ENCODE measurements at regions of chr19 and their contacts with region 1.

Region 1: GRCh38 chr19:45092747-45093678 is at the start of gene PPP1R37:
- DNase-seq: peak; percentile 88 to 95 (median 93)
- H3K4me3 ChIP-seq: peak within 1 kb of the TSS; percentile 91
- H3K4me3 Mint-ChIP-seq: peak within 1 kb of the TSS; percentile 91 to 97 (median 93)
- H3K27ac ChIP-seq: peak within 1 kb of the TSS; percentile 93
- H3K27ac Mint-ChIP-seq: peak within 1 kb of the TSS; percentile 90 to 100 (median 98)
- H3K4me1 ChIP-seq: peaks cover 71% of the 10 kb centered on the region
- H3K4me1 Mint-ChIP-seq: peaks cover 68 to 78% (median 75%) of the 10 kb centered on the region in 3 donors
- H3K27me3 ChIP-seq: no peaks in the 10 kb centered on the region
- H3K27me3 Mint-ChIP-seq: no peaks in the 10 kb centered on the region
- total RNA-seq, gene PPP1R37: 17.8 to 18.3 TPM

Region 2: GRCh38 chr19:45038931-45039893 is 53.8 kb before region 1 on chr19 and contains the start of gene CLASRP:
- CTCF ChIA-PET with region 1: interaction called, 11 read pairs
- POLR2A ChIA-PET with region 1: interaction called, 5 read pairs
- DNase-seq: peak; percentile 83 to 90 (median 85)
- H3K4me3 ChIP-seq: peak within 1 kb of the TSS; percentile 95
- H3K4me3 Mint-ChIP-seq: peak within 1 kb of the TSS; percentile 86 to 100 (median 94)
- H3K27ac ChIP-seq: peak within 1 kb of the TSS; percentile 98
- H3K27ac Mint-ChIP-seq: peak within 1 kb of the TSS; percentile 79 to 100 (median 95)
- H3K4me1 ChIP-seq: peaks cover 24% of the 10 kb centered on the region
- H3K4me1 Mint-ChIP-seq: peaks cover 32 to 43% (median 32%) of the 10 kb centered on the region in 3 donors
- H3K27me3 ChIP-seq: no peaks in the 10 kb centered on the region
- H3K27me3 Mint-ChIP-seq: peaks cover 0 to 2% of the 10 kb centered on the region in 2 donors
- total RNA-seq, gene CLASRP: 75.5 to 84.1 TPM

Region 3: DNA sequence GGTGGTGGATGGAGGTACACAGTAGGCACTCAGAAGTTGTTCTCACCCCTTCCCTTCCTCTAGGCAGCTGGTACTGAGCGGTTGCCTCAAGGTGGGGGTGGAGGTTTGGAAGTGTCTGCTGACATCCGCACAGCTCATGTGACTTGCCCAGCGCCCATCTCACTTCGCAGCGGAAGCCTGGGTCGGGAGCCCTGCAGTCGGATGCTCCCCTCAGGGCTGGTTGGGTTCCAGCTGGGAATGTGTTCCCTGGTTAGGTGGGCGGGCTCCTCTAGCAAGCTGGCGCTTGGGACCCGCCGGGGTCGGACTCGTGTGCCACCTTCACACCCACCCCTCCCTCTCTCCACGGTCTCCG is 10.1 kb after region 1 on chr19:
- CTCF ChIA-PET with region 1: interaction called, 22 read pairs
- POLR2A ChIA-PET with region 1: interaction called, 20 read pairs
- DNase-seq: peak; percentile 20 to 75 (median 30)
- H3K4me3 ChIP-seq: peak overlapping the region; percentile 45
- H3K4me3 Mint-ChIP-seq: peak overlapping the region in 6 of 7 donors; percentile 63 to 88 (median 71)
- H3K27ac ChIP-seq: no peak overlapping the region
- H3K27ac Mint-ChIP-seq: peak overlapping the region in 7 of 8 donors; percentile 28 to 88 (median 77)
- H3K4me1 ChIP-seq: peaks cover 43% of the 10 kb centered on the region
- H3K4me1 Mint-ChIP-seq: peaks cover 49 to 74% (median 65%) of the 10 kb centered on the region in 3 donors
- H3K27me3 ChIP-seq: no peaks in the 10 kb centered on the region
- H3K27me3 Mint-ChIP-seq: no peaks in the 10 kb centered on the region

Region 4: DNA sequence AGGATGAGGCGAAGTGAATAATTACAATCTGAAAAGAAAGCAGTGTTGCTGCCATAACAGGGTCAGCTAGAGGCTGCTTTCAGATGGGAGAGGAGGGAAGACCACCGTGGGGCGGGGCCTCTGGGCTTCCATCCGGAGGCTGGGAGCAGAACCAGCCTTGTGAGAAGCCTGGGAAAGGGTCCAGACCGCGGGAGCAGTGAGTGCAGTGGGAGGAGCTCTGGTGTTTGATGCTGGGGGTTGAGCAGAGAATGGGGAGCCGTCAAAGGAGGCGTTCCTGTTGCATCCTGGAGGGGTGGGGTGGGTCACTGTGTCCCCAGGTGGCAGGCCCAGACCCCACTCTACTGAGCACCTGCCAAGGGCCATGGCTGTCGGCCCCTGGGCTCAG is 49.7 kb after region 1 on chr19:
- CTCF ChIA-PET with region 1: no interaction called
- POLR2A ChIA-PET with region 1: no interaction called
- DNase-seq: no peak
- H3K4me3 ChIP-seq: no peak overlapping the region
- H3K4me3 Mint-ChIP-seq: no peak overlapping the region
- H3K27ac ChIP-seq: no peak overlapping the region
- H3K27ac Mint-ChIP-seq: no peak overlapping the region
- H3K4me1 ChIP-seq: no peaks in the 10 kb centered on the region
- H3K4me1 Mint-ChIP-seq: peaks cover 0 to 5% (median 4%) of the 10 kb centered on the region in 3 donors
- H3K27me3 ChIP-seq: no peaks in the 10 kb centered on the region
- H3K27me3 Mint-ChIP-seq: no peaks in the 10 kb centered on the region

Region 5: DNA sequence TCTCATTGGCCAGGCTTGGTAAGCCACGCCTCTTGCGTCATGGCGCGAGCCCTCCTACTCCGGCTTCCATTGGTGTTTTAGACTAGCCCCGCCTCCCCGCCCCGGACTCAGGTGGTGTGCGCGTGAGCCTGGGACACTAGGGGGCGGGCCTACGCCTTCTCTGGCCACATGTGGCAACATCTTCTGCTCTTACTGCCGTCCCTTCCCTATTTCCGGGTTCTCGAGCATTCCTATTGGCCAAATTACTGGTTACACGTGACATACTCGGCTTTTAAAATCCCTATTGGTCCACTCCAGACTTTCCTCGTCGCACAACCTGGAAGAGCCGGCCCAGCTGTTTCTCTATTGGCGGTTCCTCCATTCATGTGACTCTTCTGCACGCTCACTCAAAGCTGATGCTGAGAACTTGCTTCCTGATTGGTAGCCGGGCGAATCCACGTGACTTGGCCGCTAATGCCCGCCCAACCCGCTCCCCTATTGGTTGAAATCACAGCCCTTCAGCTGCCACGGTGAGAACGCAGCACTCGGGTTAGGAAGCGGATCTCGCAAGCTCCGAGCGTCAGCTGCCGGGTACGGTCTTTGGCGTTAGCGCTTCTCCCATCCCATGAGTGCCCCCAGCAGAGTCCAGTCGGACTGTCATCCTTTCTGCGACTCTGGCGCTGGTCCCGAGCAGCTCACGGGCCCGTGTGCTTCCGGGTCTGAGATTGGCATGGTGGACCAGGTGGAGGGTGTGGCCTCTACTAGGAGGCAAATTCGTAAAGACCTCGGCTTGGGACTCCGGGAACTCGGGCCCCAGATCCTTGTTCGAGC is 85.5 kb after region 1 on chr19 and contains the start of gene BLOC1S3:
- CTCF ChIA-PET with region 1: interaction called, 8 read pairs
- POLR2A ChIA-PET with region 1: interaction called, 24 read pairs
- DNase-seq: peak; percentile 100
- H3K4me3 ChIP-seq: peak within 1 kb of the TSS; percentile 99
- H3K4me3 Mint-ChIP-seq: peak within 1 kb of the TSS; percentile 82 to 95 (median 91)
- H3K27ac ChIP-seq: peak within 1 kb of the TSS; percentile 94
- H3K27ac Mint-ChIP-seq: peak within 1 kb of the TSS; percentile 77 to 98 (median 95)
- H3K4me1 ChIP-seq: peaks cover 36% of the 10 kb centered on the region
- H3K4me1 Mint-ChIP-seq: peaks cover 35 to 52% (median 43%) of the 10 kb centered on the region in 3 donors
- H3K27me3 ChIP-seq: no peaks in the 10 kb centered on the region
- H3K27me3 Mint-ChIP-seq: no peaks in the 10 kb centered on the region
- total RNA-seq, gene BLOC1S3: 12.4 TPM